Caco-2 (cell line): ENCODE measurements at regions of chr5 and their contacts with region 1.

Region 1: DNA sequence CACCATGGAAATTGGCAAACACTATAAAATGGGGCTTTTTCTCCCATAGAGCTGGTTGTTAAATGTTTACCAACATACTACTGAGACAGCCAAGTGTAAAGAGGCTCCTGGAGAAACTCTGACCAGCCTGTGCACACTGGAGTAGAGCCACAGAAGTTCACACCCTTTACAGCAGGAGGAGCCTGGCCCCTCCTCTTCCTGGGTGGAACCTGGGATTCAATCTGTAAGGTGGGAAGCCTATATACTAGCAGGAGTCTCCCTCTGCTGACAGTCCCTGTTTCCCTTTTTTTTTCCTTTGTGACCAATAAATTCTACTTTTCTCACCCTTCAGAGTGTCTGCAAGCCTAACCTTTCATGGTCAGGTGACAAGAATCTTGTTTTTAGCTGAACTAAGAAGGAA is 10.4 kb upstream of the SLC30A5 start:
- DNase-seq: peak; percentile 74 to 76
- H3K4me3 ChIP-seq: no peak overlapping the region
- H3K4me3 Mint-ChIP-seq: no peak overlapping the region
- H3K27ac Mint-ChIP-seq: no peak overlapping the region
- H3K4me1 ChIP-seq: peaks cover 11% of the 10 kb centered on the region
- H3K4me1 Mint-ChIP-seq: peaks cover 23% of the 10 kb centered on the region
- H3K27me3 ChIP-seq: no peaks in the 10 kb centered on the region
- H3K27me3 Mint-ChIP-seq: no peaks in the 10 kb centered on the region
- CTCF ChIP-seq: peak; percentile 41 to 63

Region 2: GRCh38 chr5:69024241-69024651 is 59.2 kb before region 1 on chr5:
- CTCF ChIA-PET with region 1: interaction called, 9 read pairs
- POLR2A ChIA-PET with region 1: no interaction called
- intact Hi-C with region 1: loop called (anchors 1 kb)
- DNase-seq: peak in 1 of 2 experiments; percentile 50
- H3K4me3 ChIP-seq: no peak overlapping the region
- H3K4me3 Mint-ChIP-seq: no peak overlapping the region
- H3K27ac Mint-ChIP-seq: no peak overlapping the region
- H3K4me1 ChIP-seq: no peaks in the 10 kb centered on the region
- H3K4me1 Mint-ChIP-seq: no peaks in the 10 kb centered on the region
- H3K27me3 ChIP-seq: no peaks in the 10 kb centered on the region
- H3K27me3 Mint-ChIP-seq: peaks cover 9% of the 10 kb centered on the region
- CTCF ChIP-seq: peak; percentile 59 to 72

Region 3: GRCh38 chr5:69042915-69043658 is 40.3 kb before region 1 on chr5:
- CTCF ChIA-PET with region 1: interaction called, 28 read pairs
- POLR2A ChIA-PET with region 1: no interaction called
- intact Hi-C with region 1: loop called (anchors 1 kb)
- DNase-seq: peak; percentile 80 to 81
- H3K4me3 ChIP-seq: peak overlapping the region; percentile 45
- H3K4me3 Mint-ChIP-seq: peak overlapping the region; percentile 89
- H3K27ac Mint-ChIP-seq: peak overlapping the region; percentile 71
- H3K4me1 ChIP-seq: peaks cover 6% of the 10 kb centered on the region; the same call in 1 of the 2 replicates
- H3K4me1 Mint-ChIP-seq: peaks cover 6% of the 10 kb centered on the region
- H3K27me3 ChIP-seq: no peaks in the 10 kb centered on the region
- H3K27me3 Mint-ChIP-seq: no peaks in the 10 kb centered on the region
- CTCF ChIP-seq: peak; percentile 74 to 82

Region 4: DNA sequence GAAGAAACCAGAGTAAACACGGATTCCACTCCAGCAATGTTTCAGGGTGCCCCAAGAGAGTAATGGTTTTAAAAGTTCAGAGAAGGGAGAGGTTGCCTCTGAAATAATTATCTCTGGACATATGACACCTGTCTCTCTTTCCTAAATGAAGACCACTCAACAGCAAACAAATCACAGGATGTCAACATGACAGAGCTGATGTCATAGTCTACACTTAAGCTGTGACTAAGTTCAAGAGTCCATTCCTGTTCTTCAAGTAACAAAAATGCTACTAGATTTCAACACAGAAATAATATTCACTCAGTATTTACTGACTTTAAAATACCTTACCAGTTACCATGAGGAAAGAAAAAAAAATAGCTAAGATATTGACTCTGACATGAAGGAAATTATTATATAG is 34.3 kb before region 1 on chr5:
- CTCF ChIA-PET with region 1: no interaction called
- POLR2A ChIA-PET with region 1: no interaction called
- intact Hi-C with region 1: loop called (anchors 1 kb)
- DNase-seq: no peak
- H3K4me3 ChIP-seq: no peak overlapping the region
- H3K4me3 Mint-ChIP-seq: no peak overlapping the region
- H3K27ac Mint-ChIP-seq: no peak overlapping the region
- H3K4me1 ChIP-seq: peaks cover 3% of the 10 kb centered on the region; the same call in 1 of the 2 replicates
- H3K4me1 Mint-ChIP-seq: peaks cover 6% of the 10 kb centered on the region
- H3K27me3 ChIP-seq: no peaks in the 10 kb centered on the region
- H3K27me3 Mint-ChIP-seq: no peaks in the 10 kb centered on the region
- CTCF ChIP-seq: no peak